Posterior vena cava (tissue), 2 donors: ENCODE measurements at regions of chr17 and their contacts with region 1.

Region 1: DNA sequence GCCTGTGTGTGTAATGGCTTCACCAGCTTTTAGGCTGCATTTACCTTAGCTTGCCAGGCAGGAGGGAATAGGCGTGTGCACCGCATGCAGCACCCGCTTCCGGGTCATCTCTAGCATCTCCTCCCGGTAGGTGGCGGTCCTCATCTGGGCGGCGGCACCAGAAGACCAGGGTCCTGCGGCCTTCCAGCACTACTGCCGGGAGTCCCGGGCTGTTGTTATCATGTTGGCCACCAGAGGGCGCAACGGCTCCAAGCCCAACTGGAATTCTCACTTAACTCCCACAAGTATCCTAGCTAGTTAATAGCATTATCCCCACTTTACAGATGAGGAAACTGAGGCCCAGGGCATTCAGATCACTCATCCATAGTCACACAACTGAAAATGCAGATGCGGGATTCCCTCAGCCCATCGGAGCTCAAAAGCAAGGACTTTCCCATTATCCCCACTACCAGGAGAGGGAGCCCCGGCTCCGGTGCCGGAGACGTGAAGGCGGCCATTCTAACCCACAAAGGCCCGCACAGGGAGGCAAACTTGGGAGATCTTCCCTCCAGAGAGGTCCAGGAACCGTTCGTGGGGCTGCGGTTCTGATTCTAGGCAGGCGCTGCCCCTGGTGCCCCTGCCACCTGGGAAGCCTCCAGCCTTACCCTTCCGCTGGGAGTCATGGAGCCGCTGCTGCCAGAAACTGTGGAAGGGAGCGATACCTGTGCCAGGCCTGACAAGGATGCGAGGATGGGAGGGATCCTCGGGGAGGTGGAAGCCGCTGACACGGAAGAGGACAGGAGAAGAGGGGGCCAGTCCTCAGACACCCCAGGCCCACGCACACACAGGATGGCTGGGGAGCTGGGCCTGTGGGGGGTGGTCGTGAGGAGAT is 23.9 kb downstream of the LGALS9 start:
- DNase-seq: peak; percentile 92

Region 2: GRCh38 chr17:27236717-27237315 is 418.1 kb before region 1 on chr17:
- intact Hi-C with region 1: loop called in 1 of 2 experiments (anchors 5 kb)
- DNase-seq: no peak

Region 3: DNA sequence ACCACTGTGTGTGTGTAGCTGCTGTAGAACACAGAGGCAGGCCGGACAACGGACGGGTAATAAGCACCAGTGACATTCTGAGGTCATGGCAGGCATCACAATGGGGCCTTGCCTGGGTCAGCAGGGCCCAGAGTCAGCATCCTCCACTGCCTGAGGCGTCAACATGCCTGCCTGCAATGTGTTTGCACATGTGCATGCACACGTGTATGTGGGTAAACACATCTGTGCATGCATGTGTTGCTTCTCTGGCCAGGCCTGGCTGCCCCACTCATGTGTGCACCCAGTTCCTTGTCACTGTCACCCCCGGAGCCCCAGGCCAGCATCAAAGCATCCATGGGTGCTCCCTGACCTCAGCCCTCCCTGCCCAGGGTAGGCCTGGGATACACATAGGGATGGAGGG is 19.4 kb after region 1 on chr17:
- intact Hi-C with region 1: no loop called
- DNase-seq: no peak

Region 4: GRCh38 chr17:27692766-27693165 is 37.9 kb after region 1 on chr17:
- intact Hi-C with region 1: no loop called
- DNase-seq: no peak

Region 5: GRCh38 chr17:27747462-27748359 is 92.8 kb after region 1 on chr17:
- intact Hi-C with region 1: loop called in 1 of 2 experiments (anchors 5 kb)
- DNase-seq: no peak

Region 6: DNA sequence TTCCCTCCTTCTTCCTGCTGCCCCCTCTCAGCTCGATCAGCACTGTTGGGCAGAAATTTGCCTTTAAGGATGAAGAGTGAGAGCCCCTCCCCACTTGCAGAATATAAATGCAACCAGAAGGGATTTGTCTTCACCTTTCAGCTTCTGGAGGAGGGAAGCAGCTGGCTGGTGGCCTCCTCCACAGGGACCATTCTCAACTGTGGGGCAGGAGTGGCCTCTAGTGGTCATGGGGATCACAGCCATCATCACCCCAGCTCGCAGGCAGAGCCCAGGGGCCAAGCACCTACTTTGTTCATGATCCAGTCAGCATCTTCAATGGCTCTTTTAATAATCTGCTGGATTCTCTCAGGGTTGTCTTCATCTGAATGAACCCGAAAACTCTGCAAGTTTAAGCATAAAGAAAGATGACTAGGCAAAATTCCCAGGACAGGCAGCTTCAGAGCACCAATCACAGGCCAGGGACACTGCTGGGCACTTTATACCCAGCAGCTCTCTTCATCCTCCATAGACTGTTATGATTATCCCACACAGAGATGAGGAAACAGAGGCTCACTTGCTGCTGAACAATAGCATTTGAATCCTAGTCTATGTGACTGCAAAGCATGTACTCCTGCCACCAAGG is 225.2 kb after region 1 on chr17:
- intact Hi-C with region 1: loop called in 1 of 2 experiments (anchors 10 kb)
- DNase-seq: peak; percentile 88